Adrenal gland (tissue), 19 donors: ENCODE measurements at regions of chr1 and their contacts with region 1.

Region 1: DNA sequence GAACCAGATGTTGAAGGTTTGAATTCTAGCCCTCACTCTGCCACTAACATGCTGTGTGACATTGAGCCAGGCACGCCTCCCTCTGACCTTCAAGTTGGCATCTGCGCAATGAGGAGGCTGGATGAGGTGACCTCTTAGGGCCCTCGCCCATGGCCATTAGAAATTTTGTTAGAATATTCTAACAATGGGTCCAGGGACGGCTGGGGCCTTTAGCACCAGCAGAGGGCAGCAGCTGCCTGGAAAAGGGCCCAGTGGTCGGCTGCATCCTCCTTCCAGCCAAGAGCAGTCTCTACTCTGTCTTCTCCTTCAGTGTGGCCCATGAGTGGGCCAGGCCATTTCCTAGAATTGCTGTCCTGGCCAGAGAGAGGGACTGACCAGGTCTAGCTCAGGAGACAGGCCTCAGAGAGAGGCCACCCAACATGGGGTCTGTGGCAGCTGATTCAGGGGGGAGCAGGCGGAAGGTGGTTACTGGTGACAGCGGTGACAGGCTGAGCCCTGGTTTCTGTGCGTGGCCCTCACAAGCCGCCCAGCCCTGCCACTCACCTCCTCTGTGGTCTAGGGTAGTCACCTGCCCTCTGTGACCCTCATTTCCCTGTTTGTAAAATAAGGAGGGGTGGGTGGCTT is 101.3 kb upstream of the ACTL8 start:
- DNase-seq: peak; percentile 58 to 83 (median 66)
- H3K4me3 ChIP-seq: no peak overlapping the region
- H3K27ac ChIP-seq: no peak overlapping the region
- H3K4me1 ChIP-seq: peaks cover 0 to 14% of the 10 kb centered on the region in 2 donors
- H3K27me3 ChIP-seq: no peaks in the 10 kb centered on the region
- CTCF ChIP-seq: peak; percentile 49 to 70 (median 65)
- POLR2A ChIP-seq: no peak

Region 2: DNA sequence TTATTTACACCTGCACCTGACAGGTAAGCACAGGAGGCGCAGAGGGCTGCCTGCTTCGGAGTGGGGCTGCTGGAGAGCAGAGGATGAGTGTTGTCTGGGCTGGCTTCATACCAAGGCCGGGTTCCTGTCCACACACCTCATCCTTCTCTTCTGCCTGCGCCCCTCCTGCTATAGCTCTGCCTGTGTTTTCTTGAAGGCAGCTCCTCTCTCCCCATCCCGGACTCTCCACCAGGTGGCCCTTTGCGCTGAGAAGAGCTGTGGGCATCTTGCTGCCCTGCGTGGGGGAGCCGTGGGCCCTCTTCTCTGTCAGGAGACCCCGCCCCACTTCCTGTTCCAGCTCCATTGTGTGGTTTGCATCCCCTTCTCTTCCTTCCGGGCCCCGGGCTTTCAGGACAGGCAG is 79.3 kb before region 1 on chr1:
- intact Hi-C with region 1: no loop called
- DNase-seq: no peak
- H3K4me3 ChIP-seq: no peak overlapping the region
- H3K27ac ChIP-seq: no peak overlapping the region
- H3K4me1 ChIP-seq: peaks cover 6 to 10% of the 10 kb centered on the region in 2 donors
- H3K27me3 ChIP-seq: no peaks in the 10 kb centered on the region
- CTCF ChIP-seq: peak in 2 of 6 experiments; percentile 8 to 15
- POLR2A ChIP-seq: no peak

Region 3: GRCh38 chr1:18091660-18092446 is 438.0 kb after region 1 on chr1:
- intact Hi-C with region 1: loop called in 1 of 2 experiments (anchors 10 kb)
- DNase-seq: peak in 5 of 7 donors; percentile 39 to 72 (median 66)
- H3K4me3 ChIP-seq: no peak overlapping the region
- H3K27ac ChIP-seq: no peak overlapping the region
- H3K4me1 ChIP-seq: no peaks in the 10 kb centered on the region
- H3K27me3 ChIP-seq: no peaks in the 10 kb centered on the region
- CTCF ChIP-seq: no peak
- POLR2A ChIP-seq: no peak

Region 4: GRCh38 chr1:18581420-18581880 is 927.6 kb after region 1 on chr1:
- intact Hi-C with region 1: loop called in 1 of 2 experiments (anchors 10 kb)
- DNase-seq: peak in 6 of 7 donors; percentile 25 to 61 (median 32)
- H3K4me3 ChIP-seq: no peak overlapping the region
- H3K27ac ChIP-seq: no peak overlapping the region
- H3K4me1 ChIP-seq: no peaks in the 10 kb centered on the region
- H3K27me3 ChIP-seq: no peaks in the 10 kb centered on the region
- CTCF ChIP-seq: peak; percentile 49 to 70 (median 66)
- POLR2A ChIP-seq: no peak

Region 5: GRCh38 chr1:18861082-18861481 is 1207.2 kb after region 1 on chr1:
- intact Hi-C with region 1: no loop called
- DNase-seq: no peak
- H3K4me3 ChIP-seq: no peak overlapping the region
- H3K27ac ChIP-seq: no peak overlapping the region
- H3K4me1 ChIP-seq: no peaks in the 10 kb centered on the region
- H3K27me3 ChIP-seq: no peaks in the 10 kb centered on the region
- CTCF ChIP-seq: no peak
- POLR2A ChIP-seq: no peak